GM18951 (cell line): ENCODE measurements at regions of chr1 and their contacts with region 1.

Region 1: DNA sequence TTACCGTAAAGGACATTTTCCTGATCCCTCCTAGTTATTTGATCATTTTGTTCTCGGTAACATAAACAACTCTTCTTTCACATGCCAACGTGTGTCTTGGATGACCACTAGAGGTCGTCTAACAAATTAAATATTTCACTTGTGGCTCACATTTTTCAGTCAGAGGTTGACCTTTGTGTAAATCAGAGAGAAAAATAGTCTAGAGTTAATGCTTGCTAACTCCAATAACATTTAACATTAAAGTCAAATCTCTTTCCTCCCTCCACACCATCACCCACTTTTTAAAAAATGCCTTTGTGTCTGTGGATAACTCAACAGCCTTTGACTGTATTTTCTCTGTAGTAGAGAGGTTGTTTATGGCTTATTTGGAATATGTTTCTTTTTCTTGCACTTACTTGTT is 220.5 kb upstream of the B3GALT2 start:
- POLR2A ChIP-seq: no peak

Region 2: GRCh38 chr1:193322223-193322622 is 84.7 kb before region 1 on chr1:
- in situ Hi-C with region 1: no loop called
- POLR2A ChIP-seq: no peak

Region 3: GRCh38 chr1:193479187-193479586 is 72.3 kb after region 1 on chr1:
- in situ Hi-C with region 1: no loop called
- POLR2A ChIP-seq: no peak

Region 4: GRCh38 chr1:193841857-193842256 is 435.0 kb after region 1 on chr1:
- in situ Hi-C with region 1: no loop called
- POLR2A ChIP-seq: no peak

Region 5: DNA sequence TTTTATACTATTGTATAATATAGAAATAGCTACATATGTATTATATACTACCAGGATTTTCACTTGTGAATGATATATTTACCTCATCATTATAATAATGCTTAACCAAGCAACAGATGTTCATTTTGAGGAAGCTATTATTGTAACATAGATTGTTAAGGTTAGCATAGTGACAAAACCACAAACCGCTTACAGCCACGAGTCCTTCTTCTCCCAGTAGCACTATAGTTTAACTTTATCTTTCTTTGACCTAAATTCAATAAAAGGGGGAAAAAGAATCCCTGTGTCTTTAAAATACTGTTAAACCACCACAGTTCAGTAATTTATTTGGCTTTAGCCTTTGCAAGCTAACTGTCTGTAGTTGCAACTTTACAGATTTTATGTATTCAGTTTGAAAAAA is 818.9 kb after region 1 on chr1:
- in situ Hi-C with region 1: no loop called
- POLR2A ChIP-seq: no peak

Region 6: GRCh38 chr1:194295685-194296084 is 888.8 kb after region 1 on chr1:
- in situ Hi-C with region 1: loop called (anchors 25 kb)
- POLR2A ChIP-seq: no peak